Prostate gland (tissue), 2 donors: ENCODE measurements at regions of chr17 and their contacts with region 1.

Region 1: DNA sequence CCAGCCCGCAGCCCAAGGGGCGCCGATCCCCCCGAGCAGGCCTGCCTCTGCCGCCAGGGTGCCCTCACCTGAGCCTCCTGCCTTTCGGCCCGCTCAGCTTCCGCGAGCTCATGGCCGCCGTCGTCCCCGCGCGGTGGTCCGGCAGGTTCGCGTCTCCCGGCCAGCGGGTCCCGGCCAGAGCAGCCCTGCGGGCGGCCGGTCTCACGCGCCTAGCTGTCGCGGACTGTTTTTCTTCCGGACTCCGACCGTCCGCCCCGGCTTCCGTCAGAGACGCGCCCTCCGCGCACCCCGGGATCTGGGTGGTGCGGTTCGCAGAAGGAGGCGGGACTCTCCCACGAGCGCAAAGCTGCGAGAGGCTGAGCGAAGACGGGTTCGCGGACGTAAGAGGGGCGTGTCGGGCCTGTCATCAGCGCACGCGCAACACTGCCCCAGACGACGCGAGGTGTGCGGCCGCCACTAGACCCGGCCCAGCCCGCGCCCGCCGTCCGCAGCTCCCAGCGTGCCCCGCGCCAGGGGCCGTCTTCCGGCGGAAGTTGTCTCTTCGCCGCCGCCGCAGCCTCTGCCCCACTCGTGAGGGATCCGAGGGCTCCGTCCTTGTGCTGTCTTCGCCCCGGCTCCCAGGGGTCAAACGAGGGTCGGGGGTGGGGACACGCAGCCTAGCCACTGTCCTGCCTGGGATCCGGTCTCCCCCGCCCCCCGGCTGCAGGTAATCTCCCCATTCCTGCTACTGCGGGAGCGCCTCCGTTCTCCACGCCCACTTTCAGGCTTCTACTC is at the start of gene INPP5K:
- DNase-seq: peak; percentile 98
- H3K4me3 ChIP-seq: peak within 1 kb of the TSS; percentile 76 to 90
- H3K27ac ChIP-seq: peak within 1 kb of the TSS; percentile 86 to 90
- H3K4me1 ChIP-seq: peaks cover 4% of the 10 kb centered on the region
- H3K27me3 ChIP-seq: no peaks in the 10 kb centered on the region
- CTCF ChIP-seq: peak in 2 of 4 experiments; percentile 36 to 39
- POLR2A ChIP-seq: peak; percentile 58
- total RNA-seq, gene INPP5K: 82.7 to 87.4 TPM

Region 2: DNA sequence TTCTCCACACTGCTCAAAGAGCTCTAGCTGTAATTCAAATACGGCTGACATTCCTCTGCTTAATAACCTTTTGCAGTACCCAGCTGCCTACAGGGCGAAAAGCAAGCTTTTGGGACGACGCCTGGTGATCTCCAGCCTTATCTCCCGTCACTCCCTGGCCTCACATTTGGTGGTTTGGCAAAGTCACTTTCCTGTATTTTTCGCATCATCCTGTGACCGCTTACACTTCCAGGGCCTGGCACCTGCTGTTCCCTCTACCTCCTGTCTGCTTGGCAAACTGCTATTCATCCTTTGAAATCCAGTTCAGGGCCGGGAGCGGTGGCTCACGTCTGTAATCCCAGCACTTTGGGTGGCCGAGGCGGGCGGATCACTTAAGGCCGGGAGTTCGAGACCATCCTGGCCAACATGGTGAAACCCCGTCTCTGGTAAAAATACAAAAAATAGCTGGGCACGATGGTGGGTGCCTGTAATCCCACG is 249.1 kb before region 1 on chr17:
- intact Hi-C with region 1: loop called (anchors 5 kb)
- DNase-seq: no peak
- H3K4me3 ChIP-seq: peak overlapping the region; percentile 55 to 79
- H3K27ac ChIP-seq: peak overlapping the region; percentile 80 to 81
- H3K4me1 ChIP-seq: no peaks in the 10 kb centered on the region
- H3K27me3 ChIP-seq: no peaks in the 10 kb centered on the region
- CTCF ChIP-seq: no peak
- POLR2A ChIP-seq: no peak

Region 3: DNA sequence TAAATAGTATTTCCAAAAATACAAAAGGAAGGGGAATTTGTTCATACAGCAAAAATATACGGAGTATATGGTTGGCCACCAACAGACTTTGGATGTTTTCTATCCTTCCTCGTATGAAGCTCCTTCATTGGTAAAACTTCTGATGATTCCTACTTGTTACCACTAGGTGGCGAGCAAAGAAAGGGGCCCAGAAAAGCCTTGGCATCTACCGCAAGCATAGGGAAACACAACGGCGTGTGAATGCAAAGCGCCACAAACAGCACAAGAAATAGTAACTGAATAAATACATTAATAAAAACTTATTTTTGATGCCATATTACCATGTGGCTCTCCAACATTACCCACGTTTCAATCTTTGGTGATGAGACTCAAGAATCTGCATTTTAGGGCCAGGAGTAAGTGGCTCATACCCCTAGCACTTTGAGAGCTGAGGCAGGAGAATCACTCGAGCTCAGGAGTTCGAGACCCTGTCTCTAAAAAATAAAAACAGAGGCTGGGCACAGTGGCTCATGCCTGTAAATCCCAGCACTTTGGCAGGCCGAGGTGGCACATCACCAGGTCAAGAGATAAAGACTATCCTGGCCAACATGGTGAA is 151.0 kb before region 1 on chr17:
- intact Hi-C with region 1: loop called (anchors 5 kb)
- DNase-seq: peak; percentile 67
- H3K4me3 ChIP-seq: no peak overlapping the region
- H3K27ac ChIP-seq: peak overlapping the region in 1 of 2 donors; percentile 12
- H3K4me1 ChIP-seq: peaks cover 10% of the 10 kb centered on the region
- H3K27me3 ChIP-seq: no peaks in the 10 kb centered on the region
- CTCF ChIP-seq: peak; percentile 73 to 87 (median 86)
- POLR2A ChIP-seq: no peak

Region 4: GRCh38 chr17:1455797-1456599 is 60.6 kb before region 1 on chr17 and contains the start of gene CRK:
- intact Hi-C with region 1: loop called (anchors 10 kb)
- DNase-seq: peak; percentile 95
- H3K4me3 ChIP-seq: peak within 1 kb of the TSS; percentile 94 to 99
- H3K27ac ChIP-seq: peak within 1 kb of the TSS; percentile 92 to 97
- H3K4me1 ChIP-seq: peaks cover 9% of the 10 kb centered on the region
- H3K27me3 ChIP-seq: no peaks in the 10 kb centered on the region
- CTCF ChIP-seq: peak in 2 of 4 experiments; percentile 20 to 35
- POLR2A ChIP-seq: peak; percentile 96
- total RNA-seq, gene CRK: 52.6 to 77.7 TPM